HEK293 (cell line): ENCODE measurements at regions of chr6 and their contacts with region 1.

Region 1: GRCh38 chr6:3438190-3439167 is 18.4 kb downstream of the SLC22A23 start:
- H3K4me3 ChIP-seq: no peak overlapping the region
- H3K27ac ChIP-seq: peak overlapping the region; percentile 88
- H3K4me1 ChIP-seq: peaks cover 23% of the 10 kb centered on the region
- CTCF ChIP-seq: no peak

Region 2: GRCh38 chr6:3222506-3223038 is 215.9 kb before region 1 on chr6:
- CTCF ChIA-PET with region 1: no interaction called
- POLR2A ChIA-PET with region 1: no interaction called
- H3K4me3 ChIP-seq: no peak overlapping the region
- H3K27ac ChIP-seq: no peak overlapping the region
- H3K4me1 ChIP-seq: peaks cover 3% of the 10 kb centered on the region; the same call in 1 of the 2 replicates
- CTCF ChIP-seq: no peak

Region 3: DNA sequence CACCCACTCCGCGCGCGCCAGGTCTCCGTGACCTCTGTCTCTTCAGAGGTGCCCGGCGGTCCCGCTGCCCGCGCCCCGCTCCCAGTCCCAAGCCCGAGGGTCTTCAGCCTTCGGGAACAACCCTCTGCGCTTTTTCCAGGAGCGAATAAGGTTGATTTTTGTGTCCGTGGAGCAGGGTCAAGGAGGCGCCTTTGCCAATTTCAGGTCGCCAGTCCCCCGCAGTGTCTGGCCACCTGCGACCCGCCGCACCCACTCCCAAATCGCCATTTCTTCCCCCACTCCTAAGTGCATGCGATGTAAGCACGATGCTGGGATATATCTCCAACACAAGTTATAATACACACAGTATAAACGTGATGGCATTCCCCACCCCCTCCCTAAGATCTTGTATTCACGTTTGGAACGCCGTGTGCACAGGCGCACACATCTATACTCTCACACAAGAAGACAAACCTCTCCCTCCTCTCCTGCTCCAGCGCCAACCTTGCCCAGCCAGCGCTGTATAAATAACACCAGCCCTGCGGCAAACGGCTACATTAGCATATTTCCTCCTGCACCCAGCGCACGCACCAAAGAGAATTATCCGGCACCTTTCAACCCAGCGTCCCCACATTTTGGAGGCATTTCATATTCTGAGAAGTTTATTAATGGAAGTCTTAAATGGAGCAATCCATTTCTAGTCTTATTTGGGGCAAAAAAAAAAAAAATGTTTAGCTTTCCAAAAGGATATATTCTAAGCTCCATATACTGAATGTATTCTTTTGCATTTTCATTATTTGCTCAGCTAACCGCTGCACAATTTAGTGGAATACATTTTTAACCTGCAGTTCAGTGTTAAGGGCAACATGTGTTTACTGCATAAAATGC is 19.2 kb after region 1 on chr6:
- CTCF ChIA-PET with region 1: interaction called, 8 read pairs
- POLR2A ChIA-PET with region 1: interaction called, 14 read pairs
- H3K4me3 ChIP-seq: peak overlapping the region; percentile 86
- H3K27ac ChIP-seq: peak overlapping the region; percentile 95
- H3K4me1 ChIP-seq: peaks cover 6% of the 10 kb centered on the region; the same call in 1 of the 2 replicates
- CTCF ChIP-seq: no peak